Activated CD4-positive, alpha-beta T cell treated with anti-CD3 and anti-CD28 coated beads, Interleukin-2, amount 10 ng/mL, durations not matched to agents 24 days and 14 days (primary cell): ENCODE measurements at regions of chr13 and their contacts with region 1.

Region 1: GRCh38 chr13:42271337-42272114 is 426 bp upstream of the AKAP11 start:
- DNase-seq: peak; percentile 98
- H3K4me3 Mint-ChIP-seq: peak overlapping the region; percentile 97
- H3K27ac Mint-ChIP-seq: peak overlapping the region; percentile 99
- H3K4me1 Mint-ChIP-seq: peaks cover 44% of the 10 kb centered on the region
- H3K27me3 Mint-ChIP-seq: peaks cover 3% of the 10 kb centered on the region

Region 2: GRCh38 chr13:41456768-41457588 is 814.5 kb before region 1 on chr13 and contains the start of gene RGCC:
- intact Hi-C with region 1: loop called (anchors 5 kb)
- DNase-seq: peak; percentile 97
- H3K4me3 Mint-ChIP-seq: peak within 1 kb of the TSS; percentile 93
- H3K27ac Mint-ChIP-seq: peak within 1 kb of the TSS; percentile 97
- H3K4me1 Mint-ChIP-seq: peaks cover 41% of the 10 kb centered on the region
- H3K27me3 Mint-ChIP-seq: peaks cover 26% of the 10 kb centered on the region
- total RNA-seq, gene RGCC: 113 and 117 TPM in 2 replicates

Region 3: DNA sequence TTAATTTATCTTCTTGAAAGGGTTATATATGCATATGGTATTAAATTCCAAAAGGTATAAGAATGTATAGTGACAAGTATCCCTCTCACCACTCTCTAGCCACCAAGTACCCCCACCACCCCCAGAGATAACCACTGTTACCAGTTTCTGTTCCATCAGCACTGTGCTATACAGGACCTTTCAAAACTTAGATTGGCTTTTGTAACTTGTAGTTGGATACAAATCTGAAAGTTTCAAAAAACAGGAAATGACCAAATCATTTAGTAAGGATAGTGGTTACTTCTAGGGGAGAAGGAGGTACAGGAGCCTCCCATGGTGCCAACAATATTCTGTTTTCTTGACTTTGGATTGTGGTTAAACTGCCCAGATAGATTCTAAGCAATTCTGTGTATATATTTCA is 57.1 kb after region 1 on chr13:
- intact Hi-C with region 1: loop called (anchors 5 kb)
- DNase-seq: no peak
- H3K4me3 Mint-ChIP-seq: peak overlapping the region; percentile 31
- H3K27ac Mint-ChIP-seq: peak overlapping the region; percentile 50
- H3K4me1 Mint-ChIP-seq: peaks cover 22% of the 10 kb centered on the region
- H3K27me3 Mint-ChIP-seq: no peaks in the 10 kb centered on the region

Region 4: DNA sequence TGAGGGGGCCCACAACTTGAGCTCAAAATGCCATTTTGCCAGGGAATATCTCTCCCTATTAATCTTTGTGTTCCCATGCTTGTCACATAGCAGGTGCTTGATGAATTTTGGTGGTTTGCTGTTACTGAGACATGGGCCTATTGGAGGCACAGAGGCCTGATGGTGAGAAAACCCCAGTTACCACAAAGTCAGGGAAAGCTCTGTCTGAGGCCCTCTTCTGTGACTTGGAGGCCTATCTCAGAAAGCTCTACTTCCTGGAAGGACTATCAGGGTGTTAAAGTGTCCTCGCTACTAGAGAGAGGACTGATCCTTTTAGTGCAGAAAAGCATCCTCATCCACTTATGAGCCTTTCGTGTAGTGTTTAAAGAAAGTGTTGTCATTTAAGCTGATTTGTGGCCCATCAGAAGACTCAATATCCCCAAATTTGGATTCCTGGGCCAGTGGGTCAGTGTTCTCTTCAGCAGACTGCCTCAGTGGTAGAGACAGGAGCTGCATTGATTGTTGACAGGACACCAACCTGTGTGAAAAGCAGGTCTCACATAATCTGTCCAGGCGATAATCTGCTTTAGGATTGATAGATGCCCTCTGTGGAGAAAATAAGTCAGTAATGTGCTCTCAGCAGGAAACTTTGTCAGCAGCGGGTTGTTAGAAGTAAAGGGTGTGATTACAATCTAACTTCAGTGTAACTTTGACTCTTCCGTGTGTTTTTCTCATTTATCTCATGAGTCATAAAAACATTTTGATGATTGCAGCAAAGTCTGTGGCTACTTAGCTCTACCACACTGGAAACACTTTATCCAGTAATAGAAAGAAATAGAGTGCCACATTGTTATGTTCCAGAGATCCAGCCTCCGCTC is 121.4 kb after region 1 on chr13:
- intact Hi-C with region 1: loop called (anchors 1 kb)
- DNase-seq: peak; percentile 86
- H3K4me3 Mint-ChIP-seq: peak overlapping the region; percentile 91
- H3K27ac Mint-ChIP-seq: peak overlapping the region; percentile 97
- H3K4me1 Mint-ChIP-seq: peaks cover 76% of the 10 kb centered on the region
- H3K27me3 Mint-ChIP-seq: no peaks in the 10 kb centered on the region

Region 5: GRCh38 chr13:42478531-42479156 is 207.1 kb after region 1 on chr13:
- intact Hi-C with region 1: loop called (anchors 1 kb)
- DNase-seq: peak; percentile 67
- H3K4me3 Mint-ChIP-seq: no peak overlapping the region
- H3K27ac Mint-ChIP-seq: no peak overlapping the region
- H3K4me1 Mint-ChIP-seq: peaks cover 18% of the 10 kb centered on the region
- H3K27me3 Mint-ChIP-seq: no peaks in the 10 kb centered on the region

Region 6: DNA sequence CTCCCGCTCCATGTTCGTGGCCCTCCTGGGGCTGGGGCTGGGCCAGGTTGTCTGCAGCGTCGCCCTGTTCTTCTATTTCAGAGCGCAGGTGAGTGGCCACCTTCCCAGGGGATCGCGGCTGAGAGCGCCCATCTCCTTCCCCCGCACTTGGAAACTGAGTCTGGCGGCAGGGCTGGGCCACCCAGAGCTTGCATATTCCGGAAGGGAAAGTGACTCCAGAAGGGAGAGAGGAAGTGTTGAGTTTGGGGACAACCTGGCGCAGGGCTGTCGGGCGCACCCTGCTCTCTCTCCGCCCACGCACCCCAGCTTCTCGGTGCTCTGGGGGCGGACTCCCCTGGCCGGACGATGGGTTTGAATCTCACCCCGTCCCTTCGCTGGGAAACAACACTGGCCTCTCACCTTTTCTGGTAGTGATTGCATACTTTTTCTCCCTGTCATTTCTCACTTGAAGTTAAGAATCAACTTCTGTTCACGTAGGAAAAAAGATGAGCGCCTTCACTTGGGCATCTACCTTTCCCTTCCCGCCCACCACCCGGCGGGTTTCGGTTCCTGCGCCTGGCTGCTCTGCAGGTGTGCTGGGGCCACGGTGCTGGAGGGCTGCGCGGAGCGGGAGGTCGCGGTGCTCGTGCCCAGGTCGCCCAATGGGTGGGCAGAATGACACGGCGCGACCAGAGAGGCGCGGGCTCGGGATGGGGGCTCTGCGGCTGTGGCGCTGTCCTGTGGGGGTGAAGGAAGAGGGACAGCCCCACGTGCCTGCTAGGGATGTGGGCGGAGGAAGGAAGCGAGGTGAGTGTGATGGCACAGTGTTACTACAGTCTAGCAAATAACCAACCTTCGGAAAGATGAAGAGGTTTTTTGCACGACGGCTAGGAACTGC is 303.1 kb after region 1 on chr13:
- intact Hi-C with region 1: loop called (anchors 1 kb)
- DNase-seq: peak; percentile 72
- H3K4me3 Mint-ChIP-seq: peak overlapping the region; percentile 82
- H3K27ac Mint-ChIP-seq: peak overlapping the region; percentile 27
- H3K4me1 Mint-ChIP-seq: peaks cover 22% of the 10 kb centered on the region
- H3K27me3 Mint-ChIP-seq: peaks cover 54% of the 10 kb centered on the region